ENCODE measurements at regions of chr7 and their contacts with region 1.

Region 1: DNA sequence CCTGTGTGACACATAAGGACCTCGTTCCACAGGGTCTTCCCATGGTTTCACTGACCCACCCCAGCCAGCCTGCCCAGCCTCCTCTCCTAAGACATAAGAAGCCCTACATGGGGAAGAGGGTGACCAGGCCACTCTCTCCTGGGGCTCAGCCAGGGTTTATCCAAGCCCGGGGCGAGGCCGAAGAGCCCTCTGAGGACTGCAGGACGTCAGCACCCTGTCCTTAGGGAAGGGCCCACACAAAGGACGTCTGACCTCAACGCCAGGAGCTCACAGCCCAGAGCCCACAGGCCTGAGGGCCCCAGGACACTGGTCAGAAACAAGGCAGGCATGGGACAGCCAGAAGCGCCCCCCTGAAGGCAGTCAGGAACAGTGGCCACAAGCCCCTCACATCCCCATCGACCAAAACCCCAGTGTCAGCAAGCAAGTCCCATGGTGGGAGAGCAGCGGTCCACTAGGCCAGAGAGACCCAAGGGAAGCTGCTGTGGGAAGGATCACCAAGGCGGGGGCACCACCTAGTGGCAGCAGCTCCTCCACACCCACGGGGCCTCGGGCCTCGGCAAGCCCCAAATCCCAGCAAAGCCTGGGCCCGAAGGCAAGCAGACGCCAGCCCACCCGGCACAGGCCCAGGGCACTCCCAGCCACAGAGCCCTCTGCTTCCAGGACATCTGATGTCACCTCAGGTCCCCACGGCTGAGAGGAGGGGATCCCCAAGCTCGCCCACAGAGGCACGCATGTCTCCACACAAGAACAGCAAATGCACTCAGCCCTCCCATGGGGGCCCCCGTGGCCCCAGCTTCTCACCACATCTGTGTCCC is 23.4 kb downstream of the MAD1L1 start:
- DNase-seq: peak; percentile 79 to 92
- ATAC-seq: peak; percentile 76
- H3K4me3 ChIP-seq: no peak overlapping the region
- H3K27ac ChIP-seq: no peak overlapping the region
- H3K4me1 ChIP-seq: no peaks in the 10 kb centered on the region
- H3K27me3 ChIP-seq: no peaks in the 10 kb centered on the region

Region 2: DNA sequence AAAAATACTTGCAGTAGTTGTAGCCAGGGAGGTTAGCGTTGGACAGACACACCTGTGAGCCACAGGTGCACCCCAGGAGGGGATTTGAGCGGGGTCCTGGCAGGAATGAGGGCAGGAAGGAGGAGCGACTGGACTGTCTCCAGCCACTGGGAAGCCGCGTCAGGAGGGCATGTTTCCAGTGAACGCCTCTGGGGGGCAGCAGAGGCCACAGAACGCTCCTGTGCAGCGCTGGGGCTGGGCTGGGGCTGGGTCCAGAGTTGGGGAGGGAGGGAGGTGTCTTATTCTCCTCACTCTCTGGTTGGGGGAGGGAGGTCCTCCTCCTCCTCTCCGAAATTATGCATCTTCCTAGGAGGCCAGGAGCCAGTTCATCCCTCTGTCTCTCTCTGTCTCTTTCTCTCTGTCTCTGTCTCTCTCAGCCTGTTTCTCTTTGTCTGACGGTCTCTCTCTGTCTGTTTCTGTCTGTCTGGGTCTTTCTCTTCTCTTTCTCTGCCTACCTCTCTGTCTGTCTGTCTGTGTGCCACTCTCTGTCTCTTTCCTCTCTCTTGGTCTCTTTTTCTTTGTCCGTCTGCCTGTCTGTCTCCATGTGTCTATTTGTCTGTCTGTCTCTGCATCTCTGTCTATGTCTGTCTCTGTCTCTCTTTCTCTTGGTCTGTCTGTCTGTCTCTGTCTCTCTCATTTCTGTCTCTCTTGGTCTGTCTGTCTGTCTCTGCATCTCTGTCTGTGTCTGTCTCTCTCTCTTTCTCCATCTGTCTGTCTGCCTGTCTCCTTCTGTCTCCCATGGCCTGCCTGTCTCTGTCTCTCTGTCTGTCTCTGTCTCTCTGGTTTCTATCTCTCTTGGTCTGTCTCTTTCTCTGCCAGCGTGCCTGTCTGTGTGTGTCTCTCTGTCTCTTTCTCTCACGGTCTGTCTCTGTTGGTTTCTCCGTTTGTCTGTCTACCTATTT is 629.6 kb before region 1 on chr7:
- intact Hi-C with region 1: loop called (anchors 5 kb)
- DNase-seq: peak; percentile 77 to 92
- ATAC-seq: peak; percentile 89
- H3K4me3 ChIP-seq: no peak overlapping the region
- H3K27ac ChIP-seq: no peak overlapping the region
- H3K4me1 ChIP-seq: no peaks in the 10 kb centered on the region
- H3K27me3 ChIP-seq: no peaks in the 10 kb centered on the region

Region 3: GRCh38 chr7:1664711-1665548 is 544.4 kb before region 1 on chr7:
- intact Hi-C with region 1: loop called (anchors 5 to 10 kb)
- DNase-seq: peak; percentile 69 to 91
- ATAC-seq: no peak
- H3K4me3 ChIP-seq: peak overlapping the region; percentile 43 to 58
- H3K27ac ChIP-seq: no peak overlapping the region
- H3K4me1 ChIP-seq: no peaks in the 10 kb centered on the region
- H3K27me3 ChIP-seq: no peaks in the 10 kb centered on the region

Region 4: GRCh38 chr7:2109936-2110585 is 99.3 kb before region 1 on chr7:
- intact Hi-C with region 1: loop called in 1 of 2 experiments (anchors 5 kb)
- DNase-seq: no peak
- ATAC-seq: no peak
- H3K4me3 ChIP-seq: no peak overlapping the region
- H3K27ac ChIP-seq: no peak overlapping the region
- H3K4me1 ChIP-seq: no peaks in the 10 kb centered on the region
- H3K27me3 ChIP-seq: no peaks in the 10 kb centered on the region

Region 5: GRCh38 chr7:2314209-2314955 is 105.0 kb after region 1 on chr7 and contains the start of gene SNX8:
- intact Hi-C with region 1: no loop called
- DNase-seq: peak; percentile 91 to 98
- ATAC-seq: peak; percentile 98
- H3K4me3 ChIP-seq: peak within 1 kb of the TSS; percentile 44 to 62
- H3K27ac ChIP-seq: no peak within 1 kb of the TSS
- H3K4me1 ChIP-seq: no peaks in the 10 kb centered on the region
- H3K27me3 ChIP-seq: no peaks in the 10 kb centered on the region
- total RNA-seq, gene SNX8: 25.9 to 26.5 TPM